ENCODE measurements at regions of chr11 and their contacts with region 1.

Region 1: DNA sequence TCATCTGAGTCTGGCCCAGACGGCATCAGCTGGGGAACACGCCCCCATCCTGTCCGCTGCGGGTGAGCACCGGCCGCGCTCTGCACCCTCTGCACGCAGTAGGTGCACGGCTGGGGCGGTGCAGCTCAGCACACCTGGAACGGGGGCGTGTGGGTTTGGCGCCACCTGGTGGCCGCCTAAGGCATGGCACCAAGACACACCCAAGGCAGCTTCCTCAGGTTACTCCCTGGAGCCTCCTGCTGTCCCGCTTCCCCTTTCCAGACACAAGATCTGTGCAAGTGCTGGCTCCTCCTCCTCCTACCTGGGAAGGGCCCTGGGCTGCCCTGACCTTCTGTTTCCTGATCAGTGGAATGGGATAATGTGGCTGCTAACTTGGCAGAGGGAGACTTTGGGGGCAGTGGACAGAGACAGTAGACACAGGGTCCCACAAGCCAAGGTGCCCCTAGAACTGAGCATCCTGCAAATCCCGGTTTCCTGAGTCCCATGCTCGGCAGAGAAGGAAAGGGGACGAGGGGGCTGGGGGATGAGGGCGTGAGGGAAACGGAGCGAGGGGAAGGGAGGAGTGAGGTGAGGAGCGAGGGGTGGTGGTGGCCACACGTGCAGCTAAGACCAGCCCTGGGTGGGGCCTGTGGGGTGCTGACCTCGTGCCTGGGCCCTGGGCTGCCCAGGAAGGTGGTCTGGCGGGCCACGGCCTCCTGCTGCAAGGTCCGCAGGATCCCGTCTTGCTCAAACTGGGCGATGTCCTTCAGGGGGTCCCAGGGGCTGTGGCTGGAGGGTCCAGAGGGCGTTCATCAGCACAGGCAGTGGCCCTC is 34.8 kb upstream of the CARS1 start:
- DNase-seq: peak; percentile 93
- H3K4me3 ChIP-seq: no peak overlapping the region; a peak in 1 of 4 replicates
- H3K27ac ChIP-seq: no peak overlapping the region
- H3K4me1 ChIP-seq: peaks cover 0 to 9% of the 10 kb centered on the region in 2 experiments; a peak in 2 of 4 replicates
- H3K27me3 ChIP-seq: no peaks in the 10 kb centered on the region
- CTCF ChIP-seq: peak; percentile 95
- EP300 ChIP-seq: no peak
- RAD21 ChIP-seq: peak; percentile 84

Region 2: DNA sequence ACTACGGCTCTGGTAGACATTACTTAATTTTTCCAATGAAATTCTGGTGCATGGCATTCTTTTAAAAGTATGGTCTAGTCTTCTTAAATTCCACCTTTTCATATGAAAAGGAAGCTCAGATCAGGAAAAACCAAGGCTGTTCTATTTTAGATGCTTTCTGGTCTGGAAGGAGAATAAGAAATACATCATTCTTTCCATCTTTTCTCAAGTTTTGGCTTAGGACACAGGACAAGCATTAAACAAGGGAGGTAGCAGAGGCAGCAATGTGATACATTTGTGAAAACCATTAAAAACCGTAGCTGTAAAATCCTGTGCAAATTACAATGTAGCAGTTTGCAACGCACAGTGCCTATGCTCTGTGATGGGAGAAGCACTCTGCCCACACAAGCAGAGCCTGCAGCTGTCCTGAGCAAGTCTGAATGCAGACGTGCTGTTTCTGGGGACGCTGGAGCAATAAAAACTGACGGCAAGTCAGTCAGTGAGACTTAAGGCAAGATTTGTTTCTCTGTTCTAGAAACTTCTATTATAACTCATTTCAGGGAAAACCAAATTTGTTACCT is 123.6 kb before region 1 on chr11:
- CTCF ChIA-PET with region 1: interaction called, 29 read pairs
- POLR2A ChIA-PET with region 1: no interaction called
- DNase-seq: no peak
- H3K4me3 ChIP-seq: no peak overlapping the region
- H3K27ac ChIP-seq: no peak overlapping the region
- H3K4me1 ChIP-seq: no peaks in the 10 kb centered on the region
- H3K27me3 ChIP-seq: no peaks in the 10 kb centered on the region
- CTCF ChIP-seq: no peak
- EP300 ChIP-seq: no peak
- RAD21 ChIP-seq: no peak

Region 3: DNA sequence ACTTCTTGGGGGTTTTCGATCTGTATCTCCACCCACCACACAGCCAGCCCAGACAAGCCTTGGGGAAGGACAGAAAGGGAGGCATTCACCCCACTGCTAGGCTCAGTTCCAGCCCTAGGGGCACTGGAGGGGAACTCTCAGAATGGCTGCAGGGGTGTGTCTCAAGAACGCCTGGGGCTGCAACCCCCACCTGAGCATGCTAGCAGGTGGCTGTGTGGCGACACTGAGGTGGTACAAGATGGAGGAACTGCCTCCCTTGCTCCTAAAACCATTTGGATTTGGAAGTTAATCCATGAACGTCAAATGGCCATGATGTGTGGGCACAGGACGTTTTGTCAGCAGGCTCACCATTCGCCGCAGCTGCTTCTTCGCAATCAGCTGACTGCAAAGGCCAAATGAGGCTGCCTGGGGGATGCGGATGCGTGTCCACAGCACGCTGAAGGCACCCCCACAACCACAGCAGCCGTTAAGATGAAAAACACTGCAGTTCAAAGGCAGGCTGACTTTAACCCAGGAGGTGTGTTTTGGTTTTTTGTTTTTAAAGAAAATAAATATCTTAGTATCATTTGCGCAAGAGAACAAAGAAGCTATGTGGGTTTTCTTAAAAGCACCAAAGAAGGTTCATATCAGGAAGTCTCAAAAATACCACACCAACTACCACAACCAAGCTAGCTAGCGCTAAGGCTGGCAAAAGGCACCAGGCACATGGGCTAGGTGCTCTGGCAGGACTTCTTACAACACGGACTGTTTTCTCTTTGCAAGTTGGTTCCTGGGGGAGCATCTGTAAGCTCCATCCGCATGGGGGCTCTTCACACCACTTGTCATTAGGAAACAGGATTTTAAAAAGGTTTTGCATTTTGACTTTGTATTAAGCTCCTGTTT is 77.7 kb before region 1 on chr11:
- CTCF ChIA-PET with region 1: interaction called, 28 read pairs
- POLR2A ChIA-PET with region 1: no interaction called
- DNase-seq: no peak
- H3K4me3 ChIP-seq: no peak overlapping the region
- H3K27ac ChIP-seq: 0 out of 4 replicates have a peak overlapping the region, but pooled peaks of 1 of the 2 experiments have one; percentile 68
- H3K4me1 ChIP-seq: peaks cover 0 to 10% of the 10 kb centered on the region in 2 experiments; a peak in 1 of 4 replicates
- H3K27me3 ChIP-seq: no peaks in the 10 kb centered on the region
- CTCF ChIP-seq: no peak
- EP300 ChIP-seq: no peak
- RAD21 ChIP-seq: no peak

Region 4: DNA sequence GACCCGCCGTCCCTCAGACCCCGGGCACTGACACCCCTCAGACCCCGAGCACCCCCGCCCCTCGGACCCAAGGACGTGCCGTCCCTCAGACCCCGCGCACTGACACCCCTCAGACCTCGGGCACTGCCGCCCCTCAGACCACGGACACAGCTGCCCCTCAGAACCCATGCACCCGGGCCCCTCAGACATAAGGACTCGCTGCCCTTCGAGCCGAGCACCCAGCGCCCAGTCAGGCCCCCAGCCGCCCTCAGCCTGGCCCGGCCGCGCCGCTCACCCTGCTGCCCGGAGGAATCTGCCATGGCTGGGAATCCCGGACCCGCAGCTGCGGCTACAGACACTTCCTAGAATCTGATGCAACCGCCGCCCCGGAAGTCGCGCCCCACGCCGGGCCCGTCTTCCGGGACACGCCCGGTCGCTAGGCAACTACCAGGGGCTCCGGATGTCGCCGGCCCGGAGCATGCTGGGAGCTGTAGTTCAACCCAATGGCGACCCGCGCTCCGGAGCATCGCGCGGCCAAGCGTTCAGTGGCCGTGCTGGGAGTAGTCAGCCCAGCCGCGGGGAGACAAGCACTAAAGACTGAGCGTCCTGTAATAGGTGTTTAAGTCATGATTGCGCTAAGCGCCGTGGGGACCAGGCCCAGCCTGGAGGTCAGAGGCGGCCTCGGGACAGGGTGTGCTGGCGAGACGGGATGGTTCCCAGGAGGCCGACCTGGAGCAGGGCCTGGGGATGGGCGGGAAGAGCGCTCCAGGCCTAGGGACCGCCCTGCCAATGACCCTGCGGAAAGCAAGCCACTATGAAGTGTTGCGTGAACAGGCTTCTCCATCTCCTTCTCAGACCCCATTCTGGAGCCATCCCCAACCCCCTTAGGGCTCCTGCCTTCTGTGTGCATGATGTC is 34.7 kb before region 1 on chr11 and contains the start of gene CARS1:
- CTCF ChIA-PET with region 1: interaction called, 403 read pairs
- POLR2A ChIA-PET with region 1: interaction called, 7 read pairs
- DNase-seq: peak; percentile 97
- H3K4me3 ChIP-seq: peak within 1 kb of the TSS; percentile 83 to 94
- H3K27ac ChIP-seq: peak within 1 kb of the TSS; percentile 79 to 84
- H3K4me1 ChIP-seq: peaks cover 12 to 35% of the 10 kb centered on the region in 2 experiments; a peak in 2 of 4 replicates
- H3K27me3 ChIP-seq: no peaks in the 10 kb centered on the region
- CTCF ChIP-seq: no peak
- EP300 ChIP-seq: no peak
- RAD21 ChIP-seq: no peak
- polyA plus RNA-seq, gene CARS1: 52.1 and 65.2 TPM in 2 replicates

Region 5: DNA sequence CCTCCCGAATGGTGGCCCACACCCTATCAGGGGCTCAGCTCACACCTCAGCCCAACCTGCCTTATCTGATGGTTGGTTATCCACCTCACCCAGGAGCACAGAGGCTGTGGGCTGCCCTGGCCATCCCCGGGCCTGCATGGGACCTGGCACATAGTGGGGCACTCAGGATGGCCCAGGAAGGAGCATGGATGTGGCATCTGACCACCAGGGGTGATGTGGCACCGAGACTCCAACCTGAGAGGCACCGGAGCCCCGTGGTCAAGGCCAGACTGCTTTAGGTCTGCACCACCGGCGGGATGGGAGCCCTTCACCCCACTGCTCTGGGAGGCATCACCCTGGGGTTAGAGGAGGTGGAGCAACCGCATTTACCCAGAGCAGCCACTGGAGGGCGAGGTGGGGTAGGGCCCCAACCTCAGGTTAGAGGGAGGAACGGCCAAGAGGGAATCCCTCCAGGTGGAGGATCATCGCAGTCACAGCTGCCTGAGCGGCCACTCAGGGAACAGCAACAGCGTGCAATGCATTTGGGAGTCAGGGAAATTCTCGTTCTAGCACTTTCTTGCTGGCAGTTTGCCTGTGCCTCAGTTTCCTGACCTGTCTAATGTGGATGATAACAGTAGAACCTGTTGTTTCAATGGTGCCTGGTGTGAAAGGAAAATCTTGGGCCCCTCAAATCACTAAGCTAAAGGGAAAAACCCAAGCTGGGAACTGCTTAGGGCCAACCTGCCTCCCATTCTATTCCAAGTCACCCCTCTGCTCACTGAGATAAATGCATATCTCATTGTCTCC is 18.1 kb after region 1 on chr11:
- CTCF ChIA-PET with region 1: interaction called, 28 read pairs
- POLR2A ChIA-PET with region 1: no interaction called
- DNase-seq: peak; percentile 76
- H3K4me3 ChIP-seq: no peak overlapping the region
- H3K27ac ChIP-seq: no peak overlapping the region
- H3K4me1 ChIP-seq: no peaks in the 10 kb centered on the region
- H3K27me3 ChIP-seq: no peaks in the 10 kb centered on the region
- CTCF ChIP-seq: peak; percentile 49
- EP300 ChIP-seq: no peak
- RAD21 ChIP-seq: peak; percentile 58

Region 6: DNA sequence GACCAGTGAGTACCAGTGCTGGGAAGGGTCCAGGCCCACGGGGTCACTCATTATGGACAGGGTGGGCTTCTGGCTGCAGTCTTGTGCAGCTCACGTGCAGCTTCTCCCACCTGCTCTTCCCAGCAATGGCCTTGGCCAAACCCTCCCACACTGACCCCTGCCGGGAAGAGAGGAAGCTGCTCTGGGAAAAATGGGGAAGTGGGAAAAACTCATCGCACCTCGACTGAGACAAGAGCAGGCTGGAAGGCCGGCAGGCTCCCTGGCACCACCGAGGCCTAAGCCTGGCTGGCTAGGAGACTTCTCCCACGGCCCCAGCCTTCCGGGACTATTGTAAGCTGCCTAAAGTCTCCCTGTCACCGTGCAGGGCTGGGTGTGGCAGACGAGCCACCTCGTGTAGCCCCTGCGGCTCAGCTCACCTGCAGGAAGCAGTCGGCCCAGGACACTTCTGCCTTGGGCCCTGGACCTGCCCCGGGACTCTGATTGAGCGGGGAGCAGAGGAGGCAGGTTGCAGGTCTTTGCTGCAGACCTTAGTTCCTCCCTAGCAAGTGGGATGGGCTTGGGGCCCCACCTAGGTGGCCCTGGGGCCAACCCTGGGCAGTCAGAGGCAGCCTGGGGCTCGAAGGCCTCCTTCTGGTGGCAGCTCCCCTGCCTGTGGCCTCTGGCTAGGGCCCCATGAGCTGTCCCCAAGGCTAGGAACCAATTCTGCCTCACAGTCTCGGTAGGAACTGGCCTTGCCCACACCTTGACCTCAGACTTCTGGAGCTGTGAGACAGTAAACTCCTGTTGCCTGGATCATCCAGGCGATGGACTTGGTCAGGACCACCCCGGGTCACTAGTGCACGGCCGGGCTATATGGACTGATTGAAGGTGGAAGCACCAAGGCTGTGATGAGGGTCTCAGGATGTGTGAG is 103.5 kb after region 1 on chr11:
- CTCF ChIA-PET with region 1: interaction called, 10 read pairs
- POLR2A ChIA-PET with region 1: no interaction called
- DNase-seq: no peak
- H3K4me3 ChIP-seq: no peak overlapping the region
- H3K27ac ChIP-seq: no peak overlapping the region; a peak in 1 of 4 replicates
- H3K4me1 ChIP-seq: peaks cover 0 to 13% of the 10 kb centered on the region in 2 experiments; a peak in 1 of 4 replicates
- H3K27me3 ChIP-seq: no peaks in the 10 kb centered on the region
- CTCF ChIP-seq: no peak
- EP300 ChIP-seq: no peak
- RAD21 ChIP-seq: no peak; the same call in 1 of the 2 replicates

Region 7: GRCh38 chr11:3222941-3223915 is 131.2 kb after region 1 on chr11:
- CTCF ChIA-PET with region 1: interaction called, 48 read pairs
- POLR2A ChIA-PET with region 1: no interaction called
- DNase-seq: peak; percentile 23
- H3K4me3 ChIP-seq: no peak overlapping the region
- H3K27ac ChIP-seq: no peak overlapping the region
- H3K4me1 ChIP-seq: no peaks in the 10 kb centered on the region; a peak in 1 of 4 replicates
- H3K27me3 ChIP-seq: no peaks in the 10 kb centered on the region
- CTCF ChIP-seq: no peak
- EP300 ChIP-seq: no peak
- RAD21 ChIP-seq: no peak

Region 8: GRCh38 chr11:3709977-3710376 is 618.0 kb after region 1 on chr11:
- CTCF ChIA-PET with region 1: no interaction called
- POLR2A ChIA-PET with region 1: no interaction called
- DNase-seq: no peak
- H3K4me3 ChIP-seq: no peak overlapping the region
- H3K27ac ChIP-seq: no peak overlapping the region
- H3K4me1 ChIP-seq: 0 out of 4 replicates have a peak, but pooled peaks cover 0 to 3% of the 10 kb centered on the region in 2 experiments
- H3K27me3 ChIP-seq: no peaks in the 10 kb centered on the region
- CTCF ChIP-seq: no peak
- EP300 ChIP-seq: no peak
- RAD21 ChIP-seq: no peak

Measured in SK-N-SH (cell line).